HepG2 (cell line): ENCODE measurements at regions of chr7 and their contacts with region 1.

Region 1: GRCh38 chr7:54839538-54840213 is 80.7 kb upstream of the SEC61G start:
- DNase-seq: peak; percentile 20
- ATAC-seq: peak; percentile 96
- H3K4me3 ChIP-seq: no peak overlapping the region
- H3K27ac ChIP-seq: no peak overlapping the region
- H3K4me1 ChIP-seq: peaks cover 19% of the 10 kb centered on the region
- H3K27me3 ChIP-seq: 0 out of 5 replicates have a peak, but pooled peaks cover 0 to 3% of the 10 kb centered on the region in 2 experiments
- CTCF ChIP-seq: peak; percentile 87
- EP300 ChIP-seq: no peak
- POLR2A ChIP-seq: no peak
- RAD21 ChIP-seq: peak; percentile 60

Region 2: GRCh38 chr7:54615537-54615936 is 224.1 kb before region 1 on chr7:
- CTCF ChIA-PET with region 1: no interaction called
- POLR2A ChIA-PET with region 1: no interaction called
- in situ Hi-C with region 1: no loop called
- intact Hi-C with region 1: no loop called
- DNase-seq: no peak
- ATAC-seq: no peak
- H3K4me3 ChIP-seq: no peak overlapping the region
- H3K27ac ChIP-seq: no peak overlapping the region
- H3K4me1 ChIP-seq: no peaks in the 10 kb centered on the region
- H3K27me3 ChIP-seq: no peaks in the 10 kb centered on the region
- CTCF ChIP-seq: no peak
- EP300 ChIP-seq: no peak
- POLR2A ChIP-seq: no peak
- RAD21 ChIP-seq: no peak

Region 3: GRCh38 chr7:54788664-54789063 is 51.0 kb before region 1 on chr7:
- CTCF ChIA-PET with region 1: no interaction called
- POLR2A ChIA-PET with region 1: no interaction called
- in situ Hi-C with region 1: loop called (anchors 5 kb)
- intact Hi-C with region 1: loop called (anchors 2 kb)
- DNase-seq: peak; percentile 53
- ATAC-seq: peak; percentile 85
- H3K4me3 ChIP-seq: no peak overlapping the region
- H3K27ac ChIP-seq: no peak overlapping the region
- H3K4me1 ChIP-seq: no peaks in the 10 kb centered on the region
- H3K27me3 ChIP-seq: peaks cover 0 to 4% of the 10 kb centered on the region in 2 experiments; a peak in 1 of 5 replicates
- CTCF ChIP-seq: peak; percentile 80
- EP300 ChIP-seq: no peak
- POLR2A ChIP-seq: no peak
- RAD21 ChIP-seq: peak; percentile 46; the same call in 1 of the 2 replicates